Left colon (tissue), 2 donors: ENCODE measurements at regions of chr3 and their contacts with region 1.

Region 1: DNA sequence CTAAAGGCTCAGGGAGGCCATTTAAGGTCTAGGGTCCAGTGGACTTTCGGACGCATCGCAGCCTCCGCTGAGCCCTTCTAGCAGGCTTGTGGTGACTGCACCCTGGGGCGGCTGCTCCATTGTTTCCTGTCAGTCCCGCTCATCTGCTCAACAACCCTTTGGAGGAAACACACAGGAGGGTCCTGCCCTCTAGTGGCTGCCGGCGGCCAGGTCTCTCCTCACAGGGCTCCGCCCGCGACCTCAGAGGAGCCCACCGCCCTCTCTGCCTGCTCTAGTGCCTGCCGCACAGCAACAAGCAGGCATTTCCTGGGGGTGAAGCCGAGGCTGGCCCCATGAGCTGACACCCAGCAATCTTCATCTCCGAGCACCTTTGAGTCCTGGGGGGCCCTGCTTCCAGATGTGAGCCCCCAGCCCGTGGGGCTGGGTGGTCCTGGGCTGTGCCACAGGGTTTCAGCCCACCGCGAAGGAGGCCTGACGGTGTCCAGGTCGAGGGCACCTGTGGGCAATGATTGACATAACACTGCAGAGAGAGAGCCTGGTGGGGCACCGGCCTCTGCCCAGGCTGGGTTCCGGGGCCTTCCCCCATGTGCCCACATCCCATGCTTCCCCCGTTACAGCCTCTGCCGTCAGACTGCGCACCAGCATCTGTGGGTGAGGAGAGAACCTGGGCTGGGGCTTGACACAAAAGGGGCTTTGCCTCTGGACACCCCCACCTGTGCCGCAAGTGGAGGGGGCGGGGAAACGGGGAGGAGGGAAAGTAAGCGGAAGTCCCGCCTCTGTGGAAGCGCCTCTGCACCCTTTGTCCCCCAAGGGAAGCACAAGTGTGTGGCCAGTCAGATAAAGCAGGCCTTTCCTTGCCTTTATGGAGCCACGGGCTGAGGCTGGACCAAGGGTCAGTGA is 27.0 kb upstream of the SFMBT1 start:
- DNase-seq: peak; percentile 83 to 92
- ATAC-seq: peak; percentile 93

Region 2: GRCh38 chr3:52831500-52832301 is 241.2 kb before region 1 on chr3:
- intact Hi-C with region 1: no loop called
- DNase-seq: peak; percentile 43 to 54
- ATAC-seq: peak; percentile 75

Region 3: DNA sequence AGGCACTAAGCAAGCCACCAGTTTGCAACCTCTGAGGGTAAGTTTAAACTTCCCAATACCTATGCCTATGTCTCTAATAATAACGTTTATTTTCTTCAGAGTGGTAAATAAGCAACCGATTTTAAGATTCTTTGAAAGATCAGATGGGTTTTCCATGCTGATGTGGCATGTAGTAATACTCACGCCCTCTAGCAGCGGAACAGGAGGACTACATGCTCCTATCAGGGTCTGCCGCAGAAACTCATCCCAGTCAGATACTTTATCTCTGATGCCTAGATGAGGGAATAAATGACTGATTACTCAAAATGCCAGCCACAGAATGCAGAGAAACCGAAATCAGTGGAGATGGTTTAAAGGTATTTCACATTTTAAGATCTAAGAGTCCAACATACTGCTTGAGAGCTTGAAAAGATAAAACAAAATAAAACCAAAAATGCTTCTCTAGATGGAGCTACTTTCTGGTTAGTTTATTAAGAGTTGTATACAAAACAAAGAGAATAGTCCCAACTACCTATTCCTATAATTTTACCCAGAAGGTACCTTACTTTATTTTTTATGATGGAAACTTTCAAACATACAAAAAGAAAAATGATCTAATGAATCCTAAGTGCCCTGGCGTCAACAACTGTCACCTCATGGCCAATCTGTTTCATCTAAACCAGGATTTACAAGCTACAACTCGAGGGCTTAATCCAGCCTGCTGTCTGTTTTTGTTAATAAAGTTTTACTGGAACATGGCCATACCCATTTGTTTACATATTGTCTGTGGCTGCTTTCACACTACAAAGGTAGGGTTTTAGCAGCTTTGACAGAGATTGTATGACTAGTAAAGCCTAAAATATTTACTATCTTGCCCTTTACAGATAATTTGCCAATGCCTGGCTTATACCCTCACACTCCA is 138.0 kb before region 1 on chr3:
- intact Hi-C with region 1: loop called in 1 of 2 experiments (anchors 10 kb)
- DNase-seq: peak; percentile 30 to 38
- ATAC-seq: peak; percentile 86

Region 4: DNA sequence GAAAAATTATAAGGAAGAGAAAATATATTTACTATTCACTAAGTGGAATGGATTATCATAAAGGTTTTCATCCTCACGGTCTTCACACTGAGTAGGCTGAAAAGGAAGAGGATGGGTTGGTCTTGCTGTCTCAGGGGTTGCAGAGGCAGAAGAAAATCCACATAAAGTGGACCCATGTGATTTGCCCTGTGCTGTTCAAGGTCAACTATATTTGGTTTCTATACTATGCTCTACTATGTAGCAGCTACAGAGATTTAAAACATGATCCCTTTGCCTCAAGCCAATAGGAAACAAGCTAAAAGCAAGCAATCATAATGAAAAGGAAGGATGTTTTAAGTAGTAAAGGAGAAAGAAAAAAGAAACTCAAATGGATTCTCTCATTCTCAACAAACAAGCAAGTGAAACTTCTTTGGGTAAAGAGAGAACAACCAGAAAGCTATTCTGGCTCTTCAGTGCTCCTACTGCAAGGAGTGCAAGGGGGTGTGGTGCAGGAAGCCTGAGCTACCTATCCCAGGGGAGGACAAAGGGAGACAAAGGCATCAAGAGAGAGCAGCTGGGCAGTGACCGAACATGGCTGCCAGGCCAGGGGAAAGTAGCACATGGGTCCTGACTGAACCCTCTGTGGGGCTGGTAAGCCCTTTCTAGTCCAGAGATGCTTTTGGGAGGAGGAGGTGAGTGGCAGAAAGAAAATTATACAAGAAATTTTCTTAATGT is 62.9 kb before region 1 on chr3:
- intact Hi-C with region 1: loop called in 1 of 2 experiments (anchors 5 kb)
- DNase-seq: no peak
- ATAC-seq: peak; percentile 23